Common myeloid progenitor, CD34-positive (primary cell): ENCODE measurements at regions of chr21 and their contacts with region 1.

Region 1: DNA sequence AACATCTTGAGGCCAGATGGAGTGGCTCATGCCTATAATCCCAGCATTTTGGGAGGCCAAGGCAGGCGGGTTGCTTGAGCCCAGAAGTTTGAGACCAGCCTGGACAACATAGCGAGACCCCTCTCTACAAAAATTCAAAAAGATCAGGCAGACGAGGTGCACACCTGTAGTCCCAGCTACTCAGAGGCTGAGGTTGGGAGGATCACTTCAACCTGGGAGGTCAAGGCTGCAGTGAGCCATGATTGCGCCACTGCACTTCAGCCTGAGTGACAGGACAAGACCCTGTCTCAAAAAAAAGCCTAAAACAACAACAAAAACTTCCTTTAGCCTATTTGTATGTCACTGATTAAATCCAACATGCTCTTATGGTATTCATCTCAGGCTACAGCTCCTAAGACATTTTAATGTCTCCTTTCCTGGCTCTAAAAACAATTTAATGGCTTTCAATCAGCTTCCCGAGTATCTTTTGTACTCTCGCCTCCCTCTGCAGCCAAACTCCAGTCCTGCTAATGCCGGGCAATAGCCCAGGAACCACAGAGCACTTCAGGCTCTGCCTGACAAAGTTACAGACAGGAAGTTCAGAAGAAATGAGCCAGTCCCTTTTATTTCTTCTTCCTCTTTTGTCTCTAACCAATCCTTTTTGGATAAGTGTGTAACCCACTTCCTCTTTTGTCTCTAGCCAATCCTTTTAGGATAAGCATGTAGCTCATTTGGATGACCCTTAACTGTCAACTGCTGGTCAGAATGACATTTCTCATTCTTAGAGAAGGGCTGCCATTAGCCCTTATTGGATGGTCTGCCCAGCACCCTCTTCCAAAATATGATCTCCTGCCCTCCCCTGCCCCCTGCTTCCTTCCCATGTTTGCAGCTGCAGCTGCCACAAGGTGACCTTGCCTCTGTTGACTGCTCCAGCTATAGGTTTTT is 6.6 kb upstream of the DOP1B start:
- DNase-seq: peak; percentile 66 to 91 (median 84)
- H3K4me3 ChIP-seq: peak overlapping the region in 4 of 7 experiments; percentile 38 to 64 (median 44)
- H3K27ac ChIP-seq: peak overlapping the region in 1 of 2 experiments; percentile 63
- H3K4me1 ChIP-seq: peaks cover 10 to 25% (median 17%) of the 10 kb centered on the region in 4 experiments
- H3K27me3 ChIP-seq: no peaks in the 10 kb centered on the region

Region 2: DNA sequence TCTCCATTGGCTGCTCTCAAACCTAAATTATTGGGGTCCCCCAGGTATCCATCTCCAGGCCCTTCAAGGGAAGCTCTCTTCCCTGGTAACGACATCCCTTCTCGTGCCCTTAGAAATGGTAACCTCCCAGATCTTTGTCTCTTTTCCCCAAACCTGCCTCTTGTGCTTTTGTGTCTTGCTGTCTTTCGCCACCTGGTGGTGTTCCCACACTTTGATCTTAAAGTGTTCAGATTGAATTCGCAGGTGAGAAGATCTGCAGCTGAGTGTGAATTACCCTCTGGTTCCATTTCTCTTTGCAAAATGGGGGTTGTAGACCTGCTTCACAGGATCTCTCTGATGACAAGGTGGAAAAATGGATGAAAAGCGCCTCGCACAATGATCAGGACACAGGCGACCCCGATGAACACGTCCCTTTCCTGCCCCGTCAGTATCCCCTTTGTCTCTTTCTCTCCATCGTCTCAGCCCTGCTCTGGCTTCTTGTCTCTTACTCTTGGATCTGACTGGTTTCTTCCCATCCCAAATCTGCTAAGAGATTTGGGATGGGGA is 59.6 kb after region 1 on chr21:
- CTCF ChIA-PET with region 1: interaction called, 104 read pairs
- POLR2A ChIA-PET with region 1: no interaction called
- DNase-seq: peak; percentile 71 to 81 (median 79)
- H3K4me3 ChIP-seq: no peak overlapping the region
- H3K27ac ChIP-seq: no peak overlapping the region
- H3K4me1 ChIP-seq: peaks cover 0 to 5% (median 1%) of the 10 kb centered on the region in 4 experiments
- H3K27me3 ChIP-seq: no peaks in the 10 kb centered on the region